ENCODE measurements at regions of chr10 and their contacts with region 1.

Region 1: DNA sequence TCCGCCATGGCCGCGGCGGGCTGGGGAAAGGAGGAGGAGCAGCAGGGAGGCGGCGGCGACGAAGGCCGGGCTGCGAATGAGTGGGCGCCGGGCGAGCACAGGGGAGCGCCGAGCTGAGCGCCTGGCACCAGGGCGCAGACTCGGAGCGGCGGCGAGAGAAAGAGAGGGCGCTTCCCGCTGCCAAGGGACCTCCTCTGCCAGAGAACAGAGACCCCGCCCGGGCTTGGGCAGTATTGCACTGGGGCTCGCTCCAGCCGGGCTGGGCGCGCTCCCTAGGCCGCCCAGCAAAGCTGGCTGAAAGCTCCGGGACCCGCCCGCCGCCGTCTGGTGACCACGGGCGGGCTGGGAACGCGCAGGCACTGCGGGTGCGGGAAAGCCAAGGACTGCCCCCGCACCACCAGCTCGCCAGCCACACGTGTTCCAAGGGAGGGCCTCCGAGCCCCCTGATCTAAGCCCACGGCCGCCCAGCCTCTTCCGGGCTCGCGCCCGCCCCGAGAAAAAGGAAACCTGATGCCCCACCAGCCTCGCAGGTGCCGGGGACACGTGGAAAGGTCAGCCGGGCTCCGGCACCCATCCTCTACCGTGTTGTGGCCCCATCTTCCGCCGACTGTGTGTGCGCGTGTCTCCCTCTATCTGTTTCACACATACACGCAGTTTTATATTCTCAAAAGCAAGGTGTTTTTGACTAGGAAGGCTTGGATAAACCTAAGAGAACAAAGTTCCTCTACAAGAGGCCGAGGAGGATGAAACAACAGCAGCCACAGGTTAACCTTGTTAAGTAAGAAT is at the start of gene CCDC6:
- DNase-seq: peak; percentile 95
- H3K4me3 Mint-ChIP-seq: peak within 1 kb of the TSS; percentile 91
- H3K27ac Mint-ChIP-seq: peak within 1 kb of the TSS; percentile 96
- H3K4me1 Mint-ChIP-seq: peaks cover 59% of the 10 kb centered on the region
- H3K27me3 Mint-ChIP-seq: no peaks in the 10 kb centered on the region
- total RNA-seq, gene CCDC6: 49.1 to 51.5 TPM

Region 2: GRCh38 chr10:58268870-58269605 is 1637.6 kb before region 1 on chr10 and contains the start of gene CISD1:
- CTCF ChIA-PET with region 1: no interaction called
- POLR2A ChIA-PET with region 1: no interaction called
- intact Hi-C with region 1: loop called (anchors 2 kb)
- DNase-seq: peak; percentile 96
- H3K4me3 Mint-ChIP-seq: peak within 1 kb of the TSS; percentile 84
- H3K27ac Mint-ChIP-seq: peak within 1 kb of the TSS; percentile 94
- H3K4me1 Mint-ChIP-seq: peaks cover 24% of the 10 kb centered on the region
- H3K27me3 Mint-ChIP-seq: no peaks in the 10 kb centered on the region
- total RNA-seq, gene CISD1: 42.3 to 44.0 TPM

Region 3: DNA sequence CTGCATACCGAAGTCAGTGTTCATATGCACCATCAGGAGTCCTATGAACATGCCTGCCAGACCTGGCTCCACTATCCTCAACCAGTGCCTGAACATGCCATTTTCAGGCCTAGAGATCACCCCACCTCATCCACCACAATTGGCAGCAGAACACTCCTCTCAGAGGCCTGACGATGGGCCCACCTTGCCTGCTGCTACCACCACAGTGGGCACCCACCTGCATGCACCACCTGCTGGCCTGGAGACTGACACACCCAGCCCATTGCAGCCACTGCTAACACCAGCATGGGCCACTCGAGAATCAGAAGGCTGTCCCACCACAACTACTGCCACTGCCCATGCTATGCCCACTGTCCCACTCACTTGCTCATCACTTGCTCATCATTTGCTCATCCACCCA is 413.6 kb before region 1 on chr10:
- CTCF ChIA-PET with region 1: no interaction called
- POLR2A ChIA-PET with region 1: no interaction called
- intact Hi-C with region 1: no loop called
- DNase-seq: no peak
- H3K4me3 Mint-ChIP-seq: no peak overlapping the region
- H3K27ac Mint-ChIP-seq: no peak overlapping the region
- H3K4me1 Mint-ChIP-seq: no peaks in the 10 kb centered on the region
- H3K27me3 Mint-ChIP-seq: no peaks in the 10 kb centered on the region

Region 4: DNA sequence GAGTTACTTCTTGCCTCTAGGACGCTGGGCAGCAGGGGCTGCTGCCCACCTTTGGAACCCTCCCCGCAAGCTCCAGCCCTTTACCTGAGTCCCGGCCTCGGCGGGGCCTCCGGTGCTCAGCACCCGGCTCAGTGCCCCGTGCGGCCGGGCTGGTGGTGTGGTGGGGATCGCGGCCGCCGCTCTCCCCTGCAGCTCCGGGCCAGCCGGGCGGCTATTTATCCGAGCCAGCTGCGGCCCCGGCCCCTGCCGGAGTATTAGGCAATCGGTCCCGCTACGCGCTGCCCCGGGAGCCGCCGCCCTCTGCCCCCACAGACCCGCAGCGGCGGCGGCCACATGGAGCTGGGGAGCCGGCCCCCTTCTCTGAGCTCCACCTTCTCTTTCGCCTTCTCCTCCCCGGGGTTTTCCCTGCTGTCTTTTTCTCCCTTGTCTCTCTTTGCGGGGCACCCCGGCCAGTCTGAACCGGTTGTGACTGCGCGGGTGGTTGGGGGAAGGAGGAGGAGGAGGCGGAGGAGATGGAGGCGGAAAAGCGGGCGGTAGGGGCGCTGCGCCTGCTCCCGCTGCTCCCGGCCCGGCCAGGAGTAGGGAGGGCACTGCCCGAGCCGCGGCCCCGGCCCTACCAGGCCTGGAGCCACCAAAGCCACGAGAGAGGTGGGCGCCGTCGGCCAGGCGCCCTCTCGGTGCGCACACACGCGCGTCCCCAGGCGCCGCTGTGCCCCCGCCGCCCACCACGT is 197.1 kb before region 1 on chr10 and contains the start of gene SLC16A9:
- CTCF ChIA-PET with region 1: no interaction called
- POLR2A ChIA-PET with region 1: interaction called, 3 read pairs
- intact Hi-C with region 1: loop called (anchors 2 kb)
- DNase-seq: peak; percentile 76
- H3K4me3 Mint-ChIP-seq: peak within 1 kb of the TSS; percentile 55
- H3K27ac Mint-ChIP-seq: no peak within 1 kb of the TSS
- H3K4me1 Mint-ChIP-seq: no peaks in the 10 kb centered on the region
- H3K27me3 Mint-ChIP-seq: peaks cover 45% of the 10 kb centered on the region
- total RNA-seq, gene SLC16A9: 0.40 to 0.44 TPM

Region 5: GRCh38 chr10:59865101-59865500 is 41.5 kb before region 1 on chr10:
- CTCF ChIA-PET with region 1: interaction called, 69 read pairs
- POLR2A ChIA-PET with region 1: interaction called, 30 read pairs
- intact Hi-C with region 1: loop called (anchors 1 kb)
- DNase-seq: no peak
- H3K4me3 Mint-ChIP-seq: peak overlapping the region; percentile 13
- H3K27ac Mint-ChIP-seq: peak overlapping the region; percentile 34
- H3K4me1 Mint-ChIP-seq: peaks cover 55% of the 10 kb centered on the region
- H3K27me3 Mint-ChIP-seq: no peaks in the 10 kb centered on the region

Region 6: DNA sequence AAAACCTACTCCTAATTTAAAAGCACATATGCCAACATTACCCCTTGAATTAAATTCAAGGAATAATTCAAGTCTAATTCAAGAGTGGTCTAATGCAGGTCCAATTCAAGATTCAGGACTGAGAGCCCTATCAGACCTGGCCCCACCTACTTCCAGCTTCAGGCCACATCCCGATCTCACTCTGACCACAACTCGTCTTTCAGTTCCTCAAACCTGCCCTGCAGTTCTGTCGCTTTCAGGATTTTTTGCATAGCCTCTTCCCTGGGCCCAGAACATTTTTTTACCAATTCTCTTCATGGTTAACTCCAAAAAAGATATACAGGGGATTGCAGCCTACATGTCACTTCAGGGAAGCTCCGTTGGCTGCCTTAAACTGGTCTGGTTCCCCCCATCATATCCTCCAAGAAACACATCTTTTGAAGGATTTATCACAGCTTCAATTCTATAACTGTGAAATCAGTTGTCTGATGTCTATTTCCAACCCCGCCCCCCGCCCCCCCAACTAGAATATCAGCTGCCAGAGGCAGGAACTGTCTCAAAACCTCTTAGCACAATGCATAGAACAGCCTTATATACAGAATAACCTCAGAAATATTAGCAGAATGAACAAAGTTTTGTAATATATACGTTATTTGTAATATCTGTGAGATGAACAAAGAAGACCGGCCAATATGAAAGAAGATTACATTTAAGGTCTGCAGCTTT is 21.0 kb before region 1 on chr10:
- CTCF ChIA-PET with region 1: interaction called, 19 read pairs
- POLR2A ChIA-PET with region 1: interaction called, 47 read pairs
- intact Hi-C with region 1: loop called (anchors 1 kb)
- DNase-seq: peak; percentile 44
- H3K4me3 Mint-ChIP-seq: no peak overlapping the region
- H3K27ac Mint-ChIP-seq: peak overlapping the region; percentile 96
- H3K4me1 Mint-ChIP-seq: peaks cover 87% of the 10 kb centered on the region
- H3K27me3 Mint-ChIP-seq: no peaks in the 10 kb centered on the region

Region 7: GRCh38 chr10:59993931-59994330 is 87.3 kb after region 1 on chr10:
- CTCF ChIA-PET with region 1: no interaction called
- POLR2A ChIA-PET with region 1: no interaction called
- intact Hi-C with region 1: no loop called
- DNase-seq: no peak
- H3K4me3 Mint-ChIP-seq: no peak overlapping the region
- H3K27ac Mint-ChIP-seq: no peak overlapping the region
- H3K4me1 Mint-ChIP-seq: peaks cover 9% of the 10 kb centered on the region
- H3K27me3 Mint-ChIP-seq: peaks cover 15% of the 10 kb centered on the region

Region 8: DNA sequence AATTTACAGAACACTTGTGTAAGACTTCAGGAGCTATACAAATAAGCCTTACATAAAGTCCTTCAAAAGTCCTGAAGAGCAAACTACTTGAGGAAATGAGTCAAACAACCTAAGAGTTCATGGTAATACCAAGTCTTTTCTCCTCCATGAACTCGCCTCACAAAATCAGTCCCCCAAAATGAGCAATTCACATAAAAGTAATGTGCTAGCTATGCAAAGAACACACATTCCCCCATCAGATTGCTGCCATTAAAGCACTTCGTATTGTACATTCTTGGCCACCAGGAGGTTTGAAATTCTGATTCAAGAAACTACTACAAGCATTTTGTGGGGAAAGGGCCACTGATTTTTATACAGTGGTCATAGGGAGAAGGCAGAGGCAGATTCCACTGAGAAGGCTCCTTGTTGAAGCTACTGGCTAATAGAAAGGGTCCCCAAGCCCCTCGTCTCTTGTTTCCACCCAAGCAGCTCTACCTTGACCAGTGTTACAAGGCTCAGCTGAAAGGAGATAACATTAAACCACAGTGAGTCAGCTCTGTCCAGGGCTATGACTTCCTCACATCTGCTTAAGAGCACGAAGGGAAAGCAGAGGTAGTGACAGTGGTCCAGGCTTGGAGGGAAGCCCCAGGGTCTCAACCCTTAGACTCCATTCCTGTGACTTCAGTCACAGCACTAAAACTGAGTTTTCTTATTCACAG is 756.5 kb after region 1 on chr10:
- CTCF ChIA-PET with region 1: no interaction called
- POLR2A ChIA-PET with region 1: no interaction called
- intact Hi-C with region 1: loop called (anchors 10 kb)
- DNase-seq: no peak
- H3K4me3 Mint-ChIP-seq: no peak overlapping the region
- H3K27ac Mint-ChIP-seq: no peak overlapping the region
- H3K4me1 Mint-ChIP-seq: peaks cover 45% of the 10 kb centered on the region
- H3K27me3 Mint-ChIP-seq: peaks cover 3% of the 10 kb centered on the region

Measured in activated CD4-positive, alpha-beta memory T cell treated with anti-CD3 and anti-CD28 coated beads for 36 hours (primary cell).